Activated CD4-positive, alpha-beta memory T cell treated with anti-CD3 and anti-CD28 coated beads for 36 hours (primary cell): ENCODE measurements at regions of chr11 and their contacts with region 1.

Region 1: DNA sequence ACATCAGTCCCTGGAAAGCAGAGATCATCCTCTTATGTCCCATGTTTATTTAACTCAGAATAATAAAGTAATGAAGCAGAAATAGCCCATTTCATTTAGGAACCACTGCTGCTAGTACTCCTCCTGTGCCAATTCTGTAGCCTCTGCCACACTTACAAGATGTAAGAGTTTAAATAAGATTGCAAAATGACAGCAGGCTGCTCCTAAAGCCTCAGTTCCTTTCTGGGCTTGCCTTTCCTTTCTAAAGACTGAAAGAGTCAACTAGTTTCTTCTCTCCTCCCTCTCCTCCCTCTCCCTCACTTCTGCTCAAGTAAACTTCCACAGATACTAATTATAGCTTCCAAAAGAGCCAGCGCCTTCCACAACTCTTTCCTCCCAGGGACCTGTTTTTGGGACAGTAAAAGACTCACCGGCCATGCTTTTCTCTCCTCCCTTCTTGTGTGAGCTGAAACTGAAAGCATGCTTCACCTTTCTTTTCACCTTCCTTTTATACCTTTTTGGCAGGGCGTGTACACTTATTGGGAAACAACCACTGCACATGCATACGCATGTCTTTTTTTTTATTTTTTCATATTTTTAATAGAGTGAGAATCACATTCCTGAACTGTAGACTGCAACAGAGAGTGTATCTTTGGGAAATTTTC is 26.1 kb upstream of the CARD16 start:
- DNase-seq: no peak
- H3K4me3 Mint-ChIP-seq: peak overlapping the region; percentile 67
- H3K27ac Mint-ChIP-seq: peak overlapping the region; percentile 55
- H3K4me1 Mint-ChIP-seq: peaks cover 32% of the 10 kb centered on the region
- H3K27me3 Mint-ChIP-seq: no peaks in the 10 kb centered on the region

Region 2: DNA sequence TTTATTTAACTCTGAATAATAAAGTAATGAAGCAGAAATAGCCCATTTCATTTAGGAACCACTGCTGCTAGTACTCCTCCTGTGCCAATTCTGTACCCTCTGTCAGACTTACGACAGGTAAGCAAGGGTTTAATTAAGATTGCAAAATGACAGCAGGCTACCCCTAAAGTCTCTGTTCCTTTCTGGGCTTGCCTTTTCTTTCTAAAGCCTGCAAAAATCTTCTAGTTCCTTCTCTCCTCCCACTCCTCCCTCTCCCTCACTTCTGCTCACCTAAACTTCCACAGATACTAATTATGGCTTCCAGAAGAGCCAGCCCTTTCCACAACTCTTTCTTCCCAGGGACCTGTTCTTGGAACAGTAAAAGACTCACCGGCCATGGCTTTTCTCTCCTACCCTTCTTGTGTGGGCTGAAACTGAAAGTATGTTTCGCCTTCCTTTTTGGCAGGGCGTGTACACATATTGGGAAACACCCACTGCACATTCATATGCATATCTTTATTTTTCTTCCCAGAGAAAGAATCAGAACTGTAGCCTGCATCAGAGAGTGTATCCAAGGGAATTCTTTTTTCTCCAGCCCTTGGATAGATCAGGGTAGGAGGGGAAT is 26.2 kb before region 1 on chr11 and contains the start of gene CARD16:
- CTCF ChIA-PET with region 1: no interaction called
- POLR2A ChIA-PET with region 1: no interaction called
- intact Hi-C with region 1: loop called (anchors 2 kb)
- DNase-seq: peak; percentile 55
- H3K4me3 Mint-ChIP-seq: peak within 1 kb of the TSS; percentile 77
- H3K27ac Mint-ChIP-seq: peak within 1 kb of the TSS; percentile 71
- H3K4me1 Mint-ChIP-seq: peaks cover 55% of the 10 kb centered on the region
- H3K27me3 Mint-ChIP-seq: no peaks in the 10 kb centered on the region
- total RNA-seq, gene CARD16: 8.6 to 10.5 TPM

Region 3: DNA sequence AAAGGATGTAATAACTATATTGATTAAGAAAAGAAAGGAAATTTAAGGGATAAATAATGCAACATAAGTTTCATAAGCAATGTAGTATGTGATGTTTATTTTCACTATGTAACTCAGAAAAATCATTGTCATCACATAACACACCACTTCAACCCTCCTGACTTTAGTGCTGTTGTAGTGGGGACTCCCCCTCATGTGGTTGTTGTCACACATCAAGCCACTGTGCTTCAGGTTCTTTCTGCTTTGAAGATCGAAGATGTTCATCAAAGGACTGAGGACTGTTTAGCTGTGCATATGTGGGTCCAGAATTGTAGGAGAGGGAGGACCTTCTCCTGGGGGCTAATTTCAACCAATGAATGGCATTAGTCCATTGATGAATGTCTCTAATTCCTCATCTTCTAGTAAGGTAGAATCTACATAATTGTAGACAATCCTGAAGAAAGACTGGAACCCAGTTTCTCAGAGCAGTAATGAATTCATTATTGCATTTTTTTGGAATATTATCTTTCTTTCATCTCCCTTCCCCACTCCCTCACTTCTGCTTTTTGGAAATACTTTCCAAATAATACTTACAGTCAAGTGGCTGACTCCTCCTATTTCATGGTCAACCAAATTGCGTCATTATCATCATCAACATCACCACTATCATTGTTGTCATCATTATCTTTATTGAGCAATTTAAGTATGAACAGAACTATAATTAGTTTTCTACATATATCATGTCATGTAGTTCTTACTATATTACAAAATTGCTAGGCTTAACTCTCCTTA is 16.3 kb before region 1 on chr11:
- CTCF ChIA-PET with region 1: no interaction called
- POLR2A ChIA-PET with region 1: no interaction called
- intact Hi-C with region 1: loop called (anchors 2 kb)
- DNase-seq: no peak
- H3K4me3 Mint-ChIP-seq: no peak overlapping the region
- H3K27ac Mint-ChIP-seq: no peak overlapping the region
- H3K4me1 Mint-ChIP-seq: no peaks in the 10 kb centered on the region
- H3K27me3 Mint-ChIP-seq: no peaks in the 10 kb centered on the region

Region 4: DNA sequence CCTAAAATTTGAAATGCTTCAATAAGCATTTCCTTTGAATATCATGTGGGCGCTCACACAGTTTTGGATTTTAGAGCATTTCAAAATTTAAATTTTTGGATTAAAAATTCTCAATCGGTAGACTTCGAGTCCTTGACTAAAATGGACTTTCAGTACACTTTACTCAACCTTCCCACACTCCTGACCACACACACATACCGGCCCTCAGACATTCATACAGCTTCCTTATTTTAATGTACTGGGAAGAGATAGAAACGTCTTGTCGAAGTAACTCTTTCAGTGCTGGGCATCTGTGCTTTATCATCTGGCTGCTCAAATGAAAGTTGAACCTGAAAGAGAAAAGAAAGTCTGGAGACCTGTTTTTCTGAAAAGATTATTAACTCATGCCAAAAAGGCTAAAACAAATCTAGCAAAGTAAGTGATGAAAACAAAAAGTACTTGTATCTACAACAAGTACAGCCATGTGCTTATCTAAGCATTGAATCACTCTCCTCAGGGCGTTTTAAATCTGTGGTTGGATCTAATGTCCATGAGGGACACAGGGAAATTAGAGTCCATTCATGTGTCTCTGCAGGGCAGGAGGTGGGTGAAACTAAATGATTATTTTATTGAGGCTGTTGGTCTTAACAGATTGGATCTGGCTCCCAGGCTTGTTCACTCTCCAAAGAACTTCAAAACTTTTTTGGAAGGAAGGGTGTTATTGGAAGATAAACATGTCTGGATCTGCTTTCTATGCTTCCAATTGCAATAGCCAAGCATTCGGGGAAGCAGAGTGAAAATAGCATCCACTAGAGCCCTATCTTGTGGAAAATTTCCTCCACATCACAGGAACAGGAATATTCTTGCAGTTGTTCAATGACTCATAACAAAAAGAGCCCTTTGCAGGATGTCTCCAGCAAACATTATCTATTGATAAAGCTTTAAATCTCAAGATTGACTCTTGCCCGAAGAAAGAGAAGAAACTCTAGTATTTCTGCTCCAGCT is 21.3 kb after region 1 on chr11:
- CTCF ChIA-PET with region 1: no interaction called
- POLR2A ChIA-PET with region 1: no interaction called
- intact Hi-C with region 1: no loop called
- DNase-seq: no peak
- H3K4me3 Mint-ChIP-seq: no peak overlapping the region
- H3K27ac Mint-ChIP-seq: no peak overlapping the region
- H3K4me1 Mint-ChIP-seq: no peaks in the 10 kb centered on the region
- H3K27me3 Mint-ChIP-seq: no peaks in the 10 kb centered on the region

Region 5: GRCh38 chr11:105202844-105203548 is 131.8 kb after region 1 on chr11:
- CTCF ChIA-PET with region 1: no interaction called
- POLR2A ChIA-PET with region 1: no interaction called
- intact Hi-C with region 1: loop called (anchors 2 kb)
- DNase-seq: no peak
- H3K4me3 Mint-ChIP-seq: peak overlapping the region; percentile 20
- H3K27ac Mint-ChIP-seq: no peak overlapping the region
- H3K4me1 Mint-ChIP-seq: peaks cover 16% of the 10 kb centered on the region
- H3K27me3 Mint-ChIP-seq: no peaks in the 10 kb centered on the region